Gastrocnemius medialis (tissue), 4 donors: ENCODE measurements at regions of chr15 and their contacts with region 1.

Region 1: DNA sequence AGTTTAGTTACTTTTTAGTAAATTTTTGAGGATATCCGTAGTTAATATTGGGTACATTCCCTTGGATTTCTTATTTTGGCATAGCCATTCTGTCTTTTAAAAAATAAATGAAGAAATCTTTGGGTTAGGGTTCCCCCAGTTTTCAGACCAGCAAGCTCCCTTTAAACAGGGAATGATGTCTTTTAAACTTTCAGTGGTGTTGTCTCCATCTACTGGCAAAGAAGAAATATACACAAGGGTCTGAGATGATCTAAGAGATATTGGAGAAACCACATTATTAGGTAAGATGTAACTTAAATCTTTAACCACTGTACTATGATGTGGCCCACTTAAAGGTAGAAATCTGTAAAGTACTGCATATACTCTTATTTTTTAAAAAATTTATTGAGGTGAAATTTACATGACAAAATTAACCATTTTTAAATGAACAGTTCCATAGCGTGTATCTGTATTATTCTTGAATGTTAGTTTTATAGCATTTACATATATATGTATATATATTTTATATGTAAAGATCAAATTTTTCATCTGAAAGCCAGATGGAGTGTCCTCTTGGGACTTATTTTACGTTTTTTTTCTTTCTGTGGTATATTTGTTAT is 35.1 kb upstream of the EIF3J start:
- DNase-seq: no peak
- ATAC-seq: peak in 1 of 2 donors; percentile 71
- H3K4me3 ChIP-seq: no peak overlapping the region
- H3K27ac ChIP-seq: no peak overlapping the region
- H3K4me1 ChIP-seq: no peaks in the 10 kb centered on the region
- H3K27me3 ChIP-seq: no peaks in the 10 kb centered on the region
- CTCF ChIP-seq: peak; percentile 32 to 66 (median 52)
- POLR2A ChIP-seq: no peak

Region 2: DNA sequence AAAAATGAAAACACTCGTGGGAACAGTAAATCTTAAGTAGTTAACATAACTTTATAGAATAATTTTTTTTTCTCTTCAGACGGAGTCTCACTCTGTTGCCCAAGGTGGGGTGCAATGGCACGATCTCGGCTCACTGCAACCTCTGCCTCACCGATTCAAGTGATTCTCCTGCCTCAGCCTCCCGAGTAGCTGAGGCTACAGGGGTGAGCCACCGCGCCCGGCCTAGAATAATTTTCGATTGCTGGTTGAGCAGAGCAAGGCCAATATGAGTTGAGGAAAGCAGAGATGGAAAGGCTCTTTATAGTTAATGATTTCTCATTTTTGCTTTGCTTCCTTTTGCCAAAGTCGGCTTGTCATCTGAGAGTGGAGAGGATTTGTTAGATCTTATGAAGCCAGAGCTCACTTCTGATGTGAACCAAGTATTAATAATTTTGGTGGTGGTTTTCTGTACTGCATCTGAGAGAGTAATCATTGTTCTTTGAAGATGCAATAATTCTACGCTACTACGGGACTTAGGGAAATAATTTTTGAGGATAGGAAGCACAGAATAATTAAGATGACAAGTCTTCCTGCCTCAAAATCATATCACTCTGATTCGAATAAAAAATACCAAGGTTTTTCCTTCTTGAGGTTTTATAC is 214.9 kb before region 1 on chr15:
- in situ Hi-C with region 1: loop called in 2 of 4 experiments (anchors 25 kb)
- intact Hi-C with region 1: loop called (anchors 10 kb)
- DNase-seq: no peak
- ATAC-seq: no peak
- H3K4me3 ChIP-seq: peak overlapping the region; percentile 68 to 91 (median 80)
- H3K27ac ChIP-seq: peak overlapping the region in 2 of 4 donors; percentile 83 to 90
- H3K4me1 ChIP-seq: peaks cover 21 to 23% of the 10 kb centered on the region in 2 donors
- H3K27me3 ChIP-seq: peaks cover 0 to 5% (median 0%) of the 10 kb centered on the region in 3 donors
- CTCF ChIP-seq: peak in 2 of 5 experiments; percentile 10 to 32
- POLR2A ChIP-seq: no peak

Region 3: DNA sequence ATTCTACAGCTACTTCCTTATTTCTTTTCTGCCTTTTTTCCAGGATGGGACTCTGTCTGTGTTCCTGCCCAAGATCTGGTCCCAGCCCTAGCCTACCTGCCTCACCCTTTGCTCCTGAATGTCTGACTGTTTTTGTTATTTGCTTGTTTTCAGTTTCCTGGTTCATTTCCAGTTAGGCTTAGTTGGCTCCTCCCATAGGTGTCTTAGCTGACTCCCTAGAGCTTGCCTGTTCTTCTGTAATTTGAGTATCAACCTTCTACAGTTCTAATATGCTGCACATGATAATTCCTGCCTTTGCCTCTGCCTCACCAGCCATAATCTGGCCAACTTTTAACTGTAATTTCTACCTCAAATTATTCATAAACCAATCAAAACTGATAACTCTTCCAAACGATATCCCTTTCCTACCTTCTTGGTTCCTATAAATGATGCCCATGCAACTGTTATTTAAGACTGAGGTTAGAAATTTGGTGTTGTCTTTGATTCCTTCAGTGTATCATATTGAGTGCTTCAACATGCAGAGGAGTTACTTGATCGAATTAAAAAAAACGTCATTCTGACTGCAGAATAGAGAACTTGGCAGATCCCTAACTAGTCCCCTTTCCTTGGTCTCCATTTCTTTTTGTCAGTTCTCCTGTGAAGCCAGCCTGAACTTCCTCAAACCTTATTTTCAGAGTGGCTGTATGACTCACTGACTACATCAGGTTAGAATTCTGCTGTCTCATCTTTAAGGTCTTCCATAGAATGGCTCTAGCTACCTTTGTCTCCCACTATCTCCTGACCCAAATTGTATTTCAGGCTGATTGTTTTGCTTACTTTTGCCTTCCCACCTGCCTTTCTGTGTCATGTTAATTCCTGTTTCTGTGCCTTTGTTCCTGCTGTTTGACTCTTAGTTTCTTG is 205.0 kb before region 1 on chr15:
- in situ Hi-C with region 1: loop called in 2 of 4 experiments (anchors 25 kb)
- intact Hi-C with region 1: no loop called
- DNase-seq: no peak
- ATAC-seq: peak; percentile 62 to 68
- H3K4me3 ChIP-seq: no peak overlapping the region
- H3K27ac ChIP-seq: peak overlapping the region in 3 of 4 donors; percentile 11 to 31 (median 27)
- H3K4me1 ChIP-seq: peaks cover 12 to 20% of the 10 kb centered on the region in 2 donors
- H3K27me3 ChIP-seq: no peaks in the 10 kb centered on the region
- CTCF ChIP-seq: no peak
- POLR2A ChIP-seq: no peak

Region 4: DNA sequence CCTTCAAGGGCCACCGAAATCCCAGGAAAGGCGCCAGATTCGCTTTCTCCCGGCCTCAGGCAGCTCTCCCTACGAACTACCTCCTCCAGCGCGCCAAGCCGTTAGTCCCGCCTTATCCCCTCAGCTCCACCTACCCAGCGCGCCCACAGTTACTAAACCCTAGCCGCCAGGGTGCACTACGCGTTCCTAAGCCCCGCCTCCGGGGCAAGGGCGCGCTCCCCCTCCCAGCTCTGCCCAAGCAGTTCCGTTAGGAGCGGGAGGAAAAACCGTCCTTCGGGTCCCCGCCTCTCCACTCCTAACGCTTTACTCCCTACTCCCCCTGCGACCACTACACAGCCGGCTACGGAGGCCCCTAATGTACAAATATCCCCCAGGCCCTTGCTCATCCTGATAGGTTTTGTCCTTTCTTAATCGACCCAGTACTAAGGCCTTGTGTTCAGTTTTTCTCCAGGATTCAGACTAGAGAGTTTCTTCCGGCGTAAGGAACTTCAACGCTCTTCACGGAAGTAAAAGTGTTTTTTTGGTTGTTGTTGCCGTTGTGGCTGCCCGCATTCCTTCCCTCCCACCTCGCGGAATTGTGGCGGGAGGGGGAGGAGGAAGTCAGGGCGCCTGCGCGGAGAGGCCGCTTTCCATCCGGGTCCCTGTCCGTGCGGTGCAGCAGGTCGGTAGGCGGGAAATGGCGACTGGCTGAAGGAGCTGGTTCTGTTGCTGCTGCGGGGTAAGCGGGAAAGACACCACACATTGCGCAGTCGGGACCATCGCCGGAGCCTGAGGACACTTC is 74.7 kb before region 1 on chr15 and contains the start of gene CTDSPL2:
- in situ Hi-C with region 1: no loop called
- intact Hi-C with region 1: loop called (anchors 2 kb)
- DNase-seq: peak; percentile 98 to 99
- ATAC-seq: peak; percentile 90 to 95
- H3K4me3 ChIP-seq: peak within 1 kb of the TSS; percentile 91 to 96 (median 94)
- H3K27ac ChIP-seq: peak within 1 kb of the TSS; percentile 93 to 99 (median 94)
- H3K4me1 ChIP-seq: peaks cover 19 to 28% of the 10 kb centered on the region in 2 donors
- H3K27me3 ChIP-seq: no peaks in the 10 kb centered on the region
- CTCF ChIP-seq: peak in 3 of 5 experiments; percentile 24 to 43 (median 28)
- POLR2A ChIP-seq: peak; percentile 36 to 54
- total RNA-seq, gene CTDSPL2: 18.3 to 26.1 (median 24.5) TPM

Region 5: DNA sequence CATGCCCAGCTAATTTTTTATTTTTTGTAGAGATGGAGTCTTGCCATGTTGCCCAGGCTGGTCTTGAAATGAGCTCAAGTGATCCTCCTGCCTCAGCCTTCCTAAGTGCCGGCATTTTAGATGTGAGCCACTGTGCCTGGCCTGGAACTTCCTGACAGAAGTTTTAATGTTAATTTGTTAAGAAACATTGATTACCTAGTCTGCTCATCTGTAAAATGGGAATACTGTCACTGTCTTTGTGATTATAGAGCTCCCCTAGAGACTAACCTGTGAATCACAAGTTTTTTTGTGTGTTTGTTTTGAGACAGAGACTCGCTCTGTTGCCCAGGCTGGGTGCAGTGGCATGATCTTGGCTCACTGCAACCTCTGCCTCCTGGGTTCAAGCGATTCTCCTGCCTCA is 30.8 kb after region 1 on chr15:
- in situ Hi-C with region 1: no loop called
- intact Hi-C with region 1: no loop called
- DNase-seq: no peak
- ATAC-seq: no peak
- H3K4me3 ChIP-seq: no peak overlapping the region
- H3K27ac ChIP-seq: no peak overlapping the region
- H3K4me1 ChIP-seq: peaks cover 6 to 18% of the 10 kb centered on the region in 2 donors
- H3K27me3 ChIP-seq: no peaks in the 10 kb centered on the region
- CTCF ChIP-seq: no peak
- POLR2A ChIP-seq: no peak

Region 6: GRCh38 chr15:44545913-44546802 is 44.3 kb after region 1 on chr15:
- in situ Hi-C with region 1: no loop called
- intact Hi-C with region 1: no loop called
- DNase-seq: peak; percentile 54 to 75
- ATAC-seq: peak; percentile 96 to 97
- H3K4me3 ChIP-seq: peak overlapping the region in 1 of 4 donors; percentile 3
- H3K27ac ChIP-seq: peak overlapping the region; percentile 78 to 88 (median 80)
- H3K4me1 ChIP-seq: peaks cover 52 to 56% of the 10 kb centered on the region in 2 donors
- H3K27me3 ChIP-seq: no peaks in the 10 kb centered on the region
- CTCF ChIP-seq: peak in 3 of 5 experiments; percentile 9 to 29 (median 20)
- POLR2A ChIP-seq: no peak

Region 7: GRCh38 chr15:44565387-44566169 is 63.7 kb after region 1 on chr15:
- in situ Hi-C with region 1: no loop called
- intact Hi-C with region 1: no loop called
- DNase-seq: no peak
- ATAC-seq: no peak
- H3K4me3 ChIP-seq: no peak overlapping the region
- H3K27ac ChIP-seq: no peak overlapping the region
- H3K4me1 ChIP-seq: no peaks in the 10 kb centered on the region
- H3K27me3 ChIP-seq: no peaks in the 10 kb centered on the region
- CTCF ChIP-seq: no peak
- POLR2A ChIP-seq: no peak